CD8-positive, alpha-beta memory T cell (primary cell): ENCODE measurements at regions of chr11 and their contacts with region 1.

Region 1: GRCh38 chr11:75445315-75445953 is 12.4 kb upstream of the KLHL35 start:
- DNase-seq: peak; percentile 55 to 79 (median 65)
- H3K4me3 ChIP-seq: no peak overlapping the region
- H3K4me3 Mint-ChIP-seq: no peak overlapping the region
- H3K27ac ChIP-seq: no peak overlapping the region
- H3K27ac Mint-ChIP-seq: peak overlapping the region in 1 of 8 donors; percentile 54
- H3K4me1 ChIP-seq: no peaks in the 10 kb centered on the region
- H3K4me1 Mint-ChIP-seq: no peaks in the 10 kb centered on the region
- H3K27me3 ChIP-seq: no peaks in the 10 kb centered on the region
- H3K27me3 Mint-ChIP-seq: peaks cover 0 to 3% of the 10 kb centered on the region in 2 donors

Region 2: GRCh38 chr11:75142714-75143419 is 302.6 kb before region 1 on chr11:
- CTCF ChIA-PET with region 1: no interaction called
- POLR2A ChIA-PET with region 1: no interaction called
- DNase-seq: peak; percentile 43 to 78 (median 46)
- H3K4me3 ChIP-seq: peak overlapping the region; percentile 16
- H3K4me3 Mint-ChIP-seq: peak overlapping the region in 6 of 7 donors; percentile 22 to 78 (median 71)
- H3K27ac ChIP-seq: peak overlapping the region; percentile 10
- H3K27ac Mint-ChIP-seq: peak overlapping the region; percentile 57 to 95 (median 78)
- H3K4me1 ChIP-seq: peaks cover 37% of the 10 kb centered on the region
- H3K4me1 Mint-ChIP-seq: peaks cover 39 to 42% (median 40%) of the 10 kb centered on the region in 3 donors
- H3K27me3 ChIP-seq: no peaks in the 10 kb centered on the region
- H3K27me3 Mint-ChIP-seq: peaks cover 2% of the 10 kb centered on the region in 2 donors

Region 3: GRCh38 chr11:75406338-75406777 is 39.1 kb before region 1 on chr11:
- CTCF ChIA-PET with region 1: interaction called, 13 read pairs
- POLR2A ChIA-PET with region 1: no interaction called
- DNase-seq: no peak
- H3K4me3 ChIP-seq: no peak overlapping the region
- H3K4me3 Mint-ChIP-seq: no peak overlapping the region
- H3K27ac ChIP-seq: no peak overlapping the region
- H3K27ac Mint-ChIP-seq: peak overlapping the region in 6 of 8 donors; percentile 15 to 40 (median 30)
- H3K4me1 ChIP-seq: peaks cover 20% of the 10 kb centered on the region
- H3K4me1 Mint-ChIP-seq: peaks cover 43 to 60% (median 46%) of the 10 kb centered on the region in 3 donors
- H3K27me3 ChIP-seq: no peaks in the 10 kb centered on the region
- H3K27me3 Mint-ChIP-seq: no peaks in the 10 kb centered on the region

Region 4: GRCh38 chr11:75525596-75526541 is 80.4 kb after region 1 on chr11 and contains the start of gene GDPD5:
- CTCF ChIA-PET with region 1: interaction called, 212 read pairs
- POLR2A ChIA-PET with region 1: no interaction called
- DNase-seq: peak; percentile 77 to 89 (median 86)
- H3K4me3 ChIP-seq: peak within 1 kb of the TSS; percentile 63
- H3K4me3 Mint-ChIP-seq: peak within 1 kb of the TSS; percentile 87 to 97 (median 91)
- H3K27ac ChIP-seq: peak within 1 kb of the TSS; percentile 31
- H3K27ac Mint-ChIP-seq: peak within 1 kb of the TSS in 7 of 8 donors; percentile 34 to 95 (median 79)
- H3K4me1 ChIP-seq: peaks cover 25% of the 10 kb centered on the region
- H3K4me1 Mint-ChIP-seq: peaks cover 30 to 49% (median 39%) of the 10 kb centered on the region in 3 donors
- H3K27me3 ChIP-seq: no peaks in the 10 kb centered on the region
- H3K27me3 Mint-ChIP-seq: peaks cover 0 to 3% of the 10 kb centered on the region in 2 donors
- total RNA-seq, gene GDPD5: 8.9 to 9.1 TPM

Region 5: DNA sequence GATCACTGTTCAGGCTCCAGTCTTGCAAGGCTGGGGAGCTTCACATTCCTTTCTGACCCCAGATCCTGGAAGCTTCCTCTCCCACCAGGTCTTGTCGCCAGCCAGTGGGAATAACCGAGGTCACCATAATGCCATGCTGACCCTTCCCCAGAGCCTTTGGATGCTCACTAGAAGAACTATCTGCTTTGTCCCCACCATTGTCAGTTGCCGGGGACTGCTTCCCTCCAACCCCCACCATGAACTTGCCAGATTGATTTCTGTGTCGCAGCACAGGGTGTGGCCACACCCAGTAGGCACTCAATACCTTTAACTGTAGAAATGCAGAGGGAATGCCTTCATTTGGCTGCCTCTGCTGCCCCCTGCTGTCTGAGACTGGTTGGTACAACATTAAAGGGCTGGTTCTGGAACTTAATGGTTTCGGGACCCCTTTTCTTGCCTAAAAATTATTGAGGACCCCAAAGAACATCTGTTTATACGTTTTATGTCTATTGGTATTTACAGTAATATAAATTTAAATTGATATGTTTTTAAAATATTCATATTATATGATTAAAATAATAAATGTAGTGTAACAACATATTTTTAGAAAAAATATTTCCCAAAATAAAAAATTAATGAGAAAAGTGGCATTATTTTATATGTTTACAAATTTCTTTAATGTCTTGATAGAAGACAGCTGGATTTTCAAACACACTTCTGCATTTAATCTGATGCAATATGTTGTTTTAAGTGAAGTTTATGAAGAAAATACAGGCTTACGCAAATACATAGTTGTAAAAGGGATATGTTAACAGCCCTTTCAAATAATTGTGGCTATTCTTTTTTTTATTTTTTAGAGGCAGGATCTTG is 87.0 kb after region 1 on chr11:
- CTCF ChIA-PET with region 1: interaction called, 212 read pairs
- POLR2A ChIA-PET with region 1: no interaction called
- DNase-seq: peak; percentile 71 to 86 (median 75)
- H3K4me3 ChIP-seq: no peak overlapping the region
- H3K4me3 Mint-ChIP-seq: peak overlapping the region in 1 of 7 donors; percentile 25
- H3K27ac ChIP-seq: no peak overlapping the region
- H3K27ac Mint-ChIP-seq: peak overlapping the region in 6 of 8 donors; percentile 3 to 74 (median 38)
- H3K4me1 ChIP-seq: peaks cover 14% of the 10 kb centered on the region
- H3K4me1 Mint-ChIP-seq: peaks cover 22 to 34% (median 32%) of the 10 kb centered on the region in 3 donors
- H3K27me3 ChIP-seq: no peaks in the 10 kb centered on the region
- H3K27me3 Mint-ChIP-seq: peaks cover 0 to 1% of the 10 kb centered on the region in 2 donors